ENCODE measurements at regions of chr10 and their contacts with region 1.

Region 1: GRCh38 chr10:76113959-76114358 is 682.5 kb downstream of the LRMDA start:
- DNase-seq: no peak

Region 2: DNA sequence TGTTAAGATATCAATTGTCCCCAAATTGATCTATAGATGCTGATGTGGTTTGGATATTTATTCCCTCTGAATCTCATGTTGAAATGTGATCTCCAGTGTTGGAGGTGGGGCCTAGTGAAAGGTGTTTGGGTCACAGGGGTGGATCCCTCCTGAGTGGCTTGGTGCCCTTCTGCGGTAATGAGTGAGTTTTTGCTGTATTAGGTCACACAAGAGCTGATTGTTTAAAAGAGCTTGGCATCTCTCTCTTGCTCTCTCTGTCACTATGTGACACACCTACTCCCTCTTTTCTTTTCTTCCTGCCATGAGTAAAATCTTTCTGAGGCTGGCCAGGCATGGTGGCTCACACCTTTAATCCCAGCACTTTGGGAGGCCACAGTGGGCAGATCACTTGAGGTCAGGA is 1385.7 kb before region 1 on chr10:
- intact Hi-C with region 1: loop called in 1 of 2 experiments (anchors 10 kb)
- DNase-seq: no peak

Region 3: GRCh38 chr10:75235375-75236177 is 878.4 kb before region 1 on chr10 and contains the start of gene COMTD1:
- intact Hi-C with region 1: no loop called
- DNase-seq: peak; percentile 98
- total RNA-seq, gene COMTD1: 10.0 to 18.1 TPM